MCF 10A (cell line): ENCODE measurements at regions of chr9 and their contacts with region 1.

Region 1: DNA sequence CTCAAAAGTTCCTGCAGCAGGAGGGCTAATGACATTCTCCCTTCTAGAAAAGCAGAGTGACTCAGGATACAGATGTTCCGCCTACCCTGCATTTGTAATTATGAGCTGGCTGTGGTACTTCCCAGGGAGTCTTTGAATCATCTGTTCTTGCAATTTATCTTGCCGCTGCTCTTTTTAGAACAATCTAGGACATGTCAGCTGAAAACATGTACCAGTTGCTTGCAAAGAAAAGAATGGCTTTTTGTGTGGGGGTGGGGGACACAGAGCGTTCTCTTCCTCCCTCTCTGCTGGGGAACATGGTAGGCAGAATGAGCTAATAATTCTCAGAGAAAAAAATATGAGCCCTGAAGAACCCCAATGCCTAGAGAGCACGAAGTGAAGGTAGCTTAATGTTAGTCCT is 51.7 kb upstream of the TUT7 start:
- DNase-seq: peak; percentile 86
- H3K4me3 Mint-ChIP-seq: peak overlapping the region; percentile 60
- H3K27ac Mint-ChIP-seq: peak overlapping the region; percentile 95
- H3K4me1 Mint-ChIP-seq: peaks cover 49% of the 10 kb centered on the region
- H3K27me3 Mint-ChIP-seq: no peaks in the 10 kb centered on the region
- CTCF ChIP-seq: no peak

Region 2: DNA sequence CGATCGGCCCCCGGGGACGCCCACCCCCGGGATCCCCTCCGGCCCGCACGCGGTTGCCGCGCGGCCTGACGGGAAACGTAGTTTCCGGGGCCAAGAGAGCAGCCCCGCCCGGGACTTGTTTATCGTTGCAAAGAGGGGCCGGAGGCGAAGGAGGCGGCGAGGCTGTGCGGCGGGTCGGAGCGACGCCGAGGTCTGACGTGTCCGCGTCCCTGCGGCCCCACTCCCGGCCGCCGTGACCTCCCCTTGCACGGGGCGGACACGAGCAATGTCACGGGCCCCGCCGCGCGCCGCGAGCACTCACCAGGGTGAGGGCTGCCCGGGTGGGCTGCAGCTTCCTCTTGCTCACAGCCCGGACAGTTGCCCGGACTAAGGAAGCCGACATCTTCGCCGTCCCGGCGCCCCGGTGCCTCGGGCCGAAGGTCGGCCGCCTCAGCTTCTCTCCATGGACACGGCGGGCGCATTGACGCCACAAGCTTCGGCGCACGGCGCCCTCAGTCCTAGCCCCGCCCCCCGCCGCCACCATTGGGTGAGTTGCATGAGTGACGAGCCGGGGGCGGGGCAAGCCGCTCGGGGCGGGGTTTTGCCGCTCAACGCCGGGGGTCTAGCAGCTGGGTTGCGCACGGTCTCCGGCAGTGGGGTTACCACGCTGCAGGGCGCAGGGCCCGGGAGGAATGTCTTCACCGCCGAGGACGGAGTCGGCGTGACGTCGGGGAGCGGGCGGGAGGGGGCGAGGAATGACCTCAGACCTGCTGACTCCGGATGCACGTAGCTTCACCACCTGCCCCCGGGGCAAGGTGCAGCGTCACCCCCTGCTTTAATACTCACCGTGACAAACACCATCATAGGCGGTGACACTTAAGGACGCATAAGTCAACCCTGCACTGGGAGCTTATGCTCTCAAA is 123.6 kb before region 1 on chr9 and contains the start of gene ISCA1:
- CTCF ChIA-PET with region 1: no interaction called
- POLR2A ChIA-PET with region 1: interaction called, 8 read pairs
- intact Hi-C with region 1: loop called (anchors 5 kb)
- DNase-seq: peak; percentile 95
- H3K4me3 Mint-ChIP-seq: peak within 1 kb of the TSS; percentile 80
- H3K27ac Mint-ChIP-seq: peak within 1 kb of the TSS; percentile 93
- H3K4me1 Mint-ChIP-seq: peaks cover 24% of the 10 kb centered on the region
- H3K27me3 Mint-ChIP-seq: no peaks in the 10 kb centered on the region
- CTCF ChIP-seq: no peak
- total RNA-seq, gene ISCA1: 24.7 and 31.1 TPM in 2 replicates

Region 3: DNA sequence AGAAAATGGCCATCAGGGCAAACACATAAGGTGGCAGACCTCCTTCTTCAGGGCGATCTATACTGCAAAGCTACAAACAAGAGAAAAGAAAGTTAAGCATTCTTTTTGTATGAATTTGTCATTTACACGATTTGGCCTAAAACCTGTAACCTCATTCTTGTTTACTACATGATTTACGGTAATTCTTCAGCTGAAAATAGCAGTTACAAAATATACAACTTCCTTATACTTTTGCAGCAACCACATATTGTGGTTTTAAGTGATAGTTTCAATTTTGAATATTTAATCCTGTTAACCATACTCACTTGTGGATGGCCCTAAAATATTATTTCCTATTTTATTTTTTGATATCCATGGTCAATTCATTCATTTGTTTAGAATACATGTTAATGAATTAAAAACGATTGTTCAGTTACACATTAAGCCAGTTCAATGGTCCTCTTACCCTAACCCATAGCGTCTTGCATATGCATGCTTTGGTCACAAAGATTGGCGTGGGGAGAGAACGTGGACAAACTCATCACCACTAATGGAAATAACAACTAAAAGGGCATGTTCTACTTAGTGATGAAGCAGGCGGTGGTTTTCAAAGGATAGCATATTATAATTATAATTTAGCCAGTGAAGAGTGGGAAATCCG is 68.3 kb before region 1 on chr9:
- CTCF ChIA-PET with region 1: interaction called, 4 read pairs
- POLR2A ChIA-PET with region 1: interaction called, 68 read pairs
- intact Hi-C with region 1: no loop called
- DNase-seq: no peak
- H3K4me3 Mint-ChIP-seq: no peak overlapping the region
- H3K27ac Mint-ChIP-seq: no peak overlapping the region
- H3K4me1 Mint-ChIP-seq: peaks cover 11% of the 10 kb centered on the region
- H3K27me3 Mint-ChIP-seq: no peaks in the 10 kb centered on the region
- CTCF ChIP-seq: no peak

Region 4: DNA sequence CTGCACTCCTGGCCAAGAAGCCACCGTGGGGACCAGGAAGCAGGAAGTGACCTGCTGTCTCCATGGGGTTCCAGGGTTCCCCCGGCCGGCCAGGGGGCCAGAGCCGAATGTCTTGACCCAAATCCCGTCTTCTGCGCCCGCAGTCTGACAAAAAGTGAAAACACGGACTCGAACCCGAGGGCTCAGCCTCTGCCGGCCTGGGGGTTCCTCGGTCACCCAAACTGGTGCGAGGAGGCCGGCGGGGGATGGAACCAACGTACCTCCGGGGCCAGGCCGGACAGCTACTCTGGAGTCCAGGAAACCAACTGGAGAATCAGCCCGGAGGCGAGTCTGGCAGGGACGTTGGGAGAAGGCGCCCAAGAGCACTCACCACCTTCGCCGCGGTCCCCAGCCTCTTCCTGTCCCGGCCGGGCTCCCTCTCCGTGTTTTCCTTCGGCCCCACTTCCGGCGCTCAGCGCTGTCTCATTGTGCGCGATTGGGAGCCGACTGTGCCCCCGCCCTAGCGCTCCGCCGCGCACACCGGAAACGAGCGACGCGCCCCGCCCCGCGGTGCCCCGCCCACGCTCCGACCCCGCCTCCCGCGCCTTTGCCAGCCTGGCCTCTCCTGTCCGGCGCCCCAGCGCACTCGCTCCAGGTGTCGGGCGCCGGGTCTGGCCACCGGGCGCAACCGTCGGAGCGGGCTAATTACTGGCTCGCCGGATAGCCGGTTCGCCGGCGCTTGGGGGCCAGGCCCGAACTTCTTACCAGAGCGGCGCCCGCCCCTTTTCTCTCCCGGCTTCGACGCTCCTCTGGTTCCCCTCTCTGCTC is 51.7 kb before region 1 on chr9 and contains the start of gene TUT7:
- CTCF ChIA-PET with region 1: interaction called, 10 read pairs
- POLR2A ChIA-PET with region 1: interaction called, 481 read pairs
- intact Hi-C with region 1: loop called (anchors 1 kb)
- DNase-seq: peak; percentile 96
- H3K4me3 Mint-ChIP-seq: peak within 1 kb of the TSS; percentile 100
- H3K27ac Mint-ChIP-seq: peak within 1 kb of the TSS; percentile 99
- H3K4me1 Mint-ChIP-seq: peaks cover 23% of the 10 kb centered on the region
- H3K27me3 Mint-ChIP-seq: no peaks in the 10 kb centered on the region
- CTCF ChIP-seq: no peak
- total RNA-seq, gene TUT7: 35.9 and 37.4 TPM in 2 replicates

Region 5: DNA sequence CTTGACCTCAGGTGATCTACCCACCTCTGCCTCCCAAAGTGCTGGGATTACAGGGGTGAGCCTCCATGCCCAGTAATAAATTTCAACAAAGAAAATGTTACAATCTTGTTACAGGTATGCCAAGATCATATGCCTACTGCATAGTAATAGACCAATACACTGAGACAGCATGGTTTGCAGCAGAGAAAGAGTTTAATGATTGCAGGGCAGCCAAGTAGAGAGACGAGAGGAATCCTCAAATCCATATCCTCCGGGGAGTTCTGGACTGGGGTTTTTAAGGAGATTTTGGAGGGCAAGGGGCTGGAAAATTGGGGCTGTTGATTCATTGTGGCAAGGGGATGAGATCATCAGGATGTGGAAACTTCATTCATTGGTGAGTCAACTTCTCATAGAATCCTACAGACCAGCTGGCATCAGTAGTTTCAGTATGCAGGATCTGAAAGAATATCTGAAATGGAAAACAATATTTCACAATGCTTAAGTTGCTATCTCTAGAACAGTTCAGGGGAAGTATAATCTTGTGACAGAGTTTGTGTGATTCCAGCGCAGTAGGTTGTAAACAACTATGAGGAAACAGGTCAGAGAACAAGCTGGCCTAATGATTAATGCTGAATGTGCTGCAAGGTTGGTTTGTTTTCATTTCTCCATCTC is 36.9 kb before region 1 on chr9:
- CTCF ChIA-PET with region 1: interaction called, 16 read pairs
- POLR2A ChIA-PET with region 1: interaction called, 385 read pairs
- intact Hi-C with region 1: loop called (anchors 5 kb)
- DNase-seq: peak; percentile 93
- H3K4me3 Mint-ChIP-seq: peak overlapping the region; percentile 21
- H3K27ac Mint-ChIP-seq: peak overlapping the region; percentile 97
- H3K4me1 Mint-ChIP-seq: peaks cover 26% of the 10 kb centered on the region
- H3K27me3 Mint-ChIP-seq: no peaks in the 10 kb centered on the region
- CTCF ChIP-seq: no peak

Region 6: GRCh38 chr9:86549401-86549811 is 143.5 kb after region 1 on chr9:
- CTCF ChIA-PET with region 1: no interaction called
- POLR2A ChIA-PET with region 1: no interaction called
- intact Hi-C with region 1: no loop called
- DNase-seq: peak; percentile 13
- H3K4me3 Mint-ChIP-seq: no peak overlapping the region
- H3K27ac Mint-ChIP-seq: no peak overlapping the region
- H3K4me1 Mint-ChIP-seq: no peaks in the 10 kb centered on the region
- H3K27me3 Mint-ChIP-seq: peaks cover 8% of the 10 kb centered on the region
- CTCF ChIP-seq: no peak

Region 7: GRCh38 chr9:86983260-86984255 is 577.6 kb after region 1 on chr9:
- CTCF ChIA-PET with region 1: interaction called, 3 read pairs
- POLR2A ChIA-PET with region 1: interaction called, 10 read pairs
- intact Hi-C with region 1: no loop called
- DNase-seq: peak; percentile 97
- H3K4me3 Mint-ChIP-seq: peak overlapping the region; percentile 46
- H3K27ac Mint-ChIP-seq: peak overlapping the region; percentile 97
- H3K4me1 Mint-ChIP-seq: peaks cover 64% of the 10 kb centered on the region
- H3K27me3 Mint-ChIP-seq: no peaks in the 10 kb centered on the region
- CTCF ChIP-seq: no peak

Region 8: GRCh38 chr9:87375397-87376073 is 969.6 kb after region 1 on chr9:
- CTCF ChIA-PET with region 1: no interaction called
- POLR2A ChIA-PET with region 1: interaction called, 15 read pairs
- intact Hi-C with region 1: no loop called
- DNase-seq: peak; percentile 91
- H3K4me3 Mint-ChIP-seq: peak overlapping the region; percentile 26
- H3K27ac Mint-ChIP-seq: peak overlapping the region; percentile 85
- H3K4me1 Mint-ChIP-seq: peaks cover 34% of the 10 kb centered on the region
- H3K27me3 Mint-ChIP-seq: no peaks in the 10 kb centered on the region
- CTCF ChIP-seq: no peak